RWPE1 (cell line): ENCODE measurements at regions of chr4 and their contacts with region 1.

Region 1: GRCh38 chr4:185039508-185040273 is 21.4 kb downstream of the HELT start:
- DNase-seq: peak; percentile 70
- H3K27ac ChIP-seq: no peak overlapping the region
- CTCF ChIP-seq: peak; percentile 79

Region 2: DNA sequence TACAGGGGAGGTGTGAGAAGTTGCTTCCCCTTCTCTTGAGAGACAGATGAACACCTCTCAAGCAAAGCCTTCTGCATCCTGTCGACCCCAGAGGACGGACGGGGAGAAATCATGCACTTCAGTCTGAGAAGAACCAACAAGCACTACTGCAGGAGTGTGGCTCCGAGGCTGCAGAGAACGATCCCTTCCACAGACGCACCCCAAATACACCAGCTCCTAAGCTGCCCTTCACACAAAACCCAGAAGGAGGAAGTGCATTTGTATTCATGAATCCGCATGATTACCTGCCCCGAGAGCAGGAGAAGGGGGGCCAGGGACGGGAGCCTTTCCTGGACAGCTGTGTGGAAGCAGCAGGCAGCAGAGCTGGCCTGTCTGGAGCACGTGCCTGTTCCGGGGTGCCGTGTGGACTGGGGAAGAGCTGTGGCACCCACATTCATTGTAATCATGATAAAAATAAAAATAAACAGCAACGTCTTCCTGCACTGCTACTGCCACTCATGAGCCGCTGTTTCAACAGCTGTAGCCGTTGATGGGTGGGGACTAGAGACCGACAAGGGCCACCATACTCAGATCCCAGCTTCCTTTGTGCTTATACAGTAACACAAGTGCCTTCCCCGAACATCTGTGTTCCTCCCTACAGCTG is 256.8 kb before region 1 on chr4:
- CTCF ChIA-PET with region 1: no interaction called
- POLR2A ChIA-PET with region 1: no interaction called
- DNase-seq: no peak
- H3K27ac ChIP-seq: no peak overlapping the region
- CTCF ChIP-seq: no peak

Region 3: GRCh38 chr4:185096032-185096653 is 56.5 kb after region 1 on chr4:
- CTCF ChIA-PET with region 1: interaction called, 15 read pairs
- POLR2A ChIA-PET with region 1: no interaction called
- DNase-seq: peak; percentile 49
- H3K27ac ChIP-seq: no peak overlapping the region
- CTCF ChIP-seq: peak; percentile 67

Region 4: DNA sequence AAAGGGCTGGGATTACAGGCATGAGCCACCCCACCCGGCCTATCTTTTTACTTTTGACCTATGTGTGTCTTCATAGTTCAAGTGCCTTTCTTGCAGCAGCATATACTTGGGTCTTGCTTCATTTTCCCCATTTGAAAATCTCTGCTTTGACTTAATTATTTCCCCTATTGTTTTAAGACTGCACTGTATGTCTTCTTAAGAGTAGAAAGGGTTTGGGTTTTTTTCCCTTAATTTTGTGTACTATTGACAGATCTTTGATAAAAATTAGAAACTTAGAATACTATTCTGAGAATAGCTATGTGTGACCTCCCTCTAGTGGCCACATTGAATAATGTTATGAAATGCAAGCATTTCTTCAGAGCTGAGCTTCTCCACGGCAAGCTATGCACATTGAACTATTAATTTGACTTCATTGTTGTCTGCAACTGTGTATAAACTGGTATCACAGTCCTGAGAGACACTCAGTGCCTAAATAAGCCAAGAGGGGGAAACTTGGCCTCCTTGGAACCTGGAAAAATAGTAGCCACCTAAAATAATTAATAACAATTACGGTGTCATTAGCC is 94.7 kb after region 1 on chr4:
- CTCF ChIA-PET with region 1: interaction called, 11 read pairs
- POLR2A ChIA-PET with region 1: no interaction called
- DNase-seq: peak; percentile 49
- H3K27ac ChIP-seq: no peak overlapping the region
- CTCF ChIP-seq: peak; percentile 77

Region 5: GRCh38 chr4:185203486-185204237 is 164.0 kb after region 1 on chr4 and contains the start of gene CFAP97:
- CTCF ChIA-PET with region 1: no interaction called
- POLR2A ChIA-PET with region 1: no interaction called
- DNase-seq: peak; percentile 75
- H3K27ac ChIP-seq: peak within 1 kb of the TSS; percentile 89
- CTCF ChIP-seq: no peak